Lower leg skin (tissue), 4 donors: ENCODE measurements at regions of chr4 and their contacts with region 1.

Region 1: GRCh38 chr4:86401816-86402215 is 42.0 kb upstream of the MAPK10 start:
- DNase-seq: no peak
- H3K4me3 ChIP-seq: no peak overlapping the region
- CTCF ChIP-seq: no peak
- POLR2A ChIP-seq: no peak

Region 2: GRCh38 chr4:86416081-86416480 is 14.3 kb after region 1 on chr4:
- intact Hi-C with region 1: loop called (anchors 1 kb)
- DNase-seq: no peak
- H3K4me3 ChIP-seq: no peak overlapping the region
- CTCF ChIP-seq: no peak
- POLR2A ChIP-seq: no peak